PC-9 (cell line): ENCODE measurements at regions of chr6 and their contacts with region 1.

Region 1: GRCh38 chr6:119147101-119148053 is 68.9 kb upstream of the FAM184A start:
- DNase-seq: peak; percentile 78 to 99
- H3K4me3 ChIP-seq: no peak overlapping the region
- H3K27ac ChIP-seq: peak overlapping the region; percentile 75
- H3K4me1 ChIP-seq: peaks cover 43% of the 10 kb centered on the region
- H3K27me3 ChIP-seq: no peaks in the 10 kb centered on the region
- CTCF ChIP-seq: no peak

Region 2: GRCh38 chr6:118709859-118710350 is 437.5 kb before region 1 on chr6:
- CTCF ChIA-PET with region 1: no interaction called
- POLR2A ChIA-PET with region 1: no interaction called
- intact Hi-C with region 1: no loop called
- DNase-seq: peak in 1 of 2 experiments; percentile 82
- H3K4me3 ChIP-seq: peak overlapping the region; percentile 71
- H3K27ac ChIP-seq: peak overlapping the region; percentile 93
- H3K4me1 ChIP-seq: peaks cover 52% of the 10 kb centered on the region
- H3K27me3 ChIP-seq: no peaks in the 10 kb centered on the region
- CTCF ChIP-seq: no peak

Region 3: GRCh38 chr6:119129148-119129967 is 18.0 kb before region 1 on chr6:
- CTCF ChIA-PET with region 1: interaction called, 11 read pairs
- POLR2A ChIA-PET with region 1: no interaction called
- intact Hi-C with region 1: loop called (anchors 1 kb)
- DNase-seq: peak; percentile 20 to 68
- H3K4me3 ChIP-seq: 0 out of 2 replicates have a peak overlapping the region, but pooled peaks have one; percentile 2
- H3K27ac ChIP-seq: peak overlapping the region; percentile 55
- H3K4me1 ChIP-seq: peaks cover 35% of the 10 kb centered on the region
- H3K27me3 ChIP-seq: no peaks in the 10 kb centered on the region
- CTCF ChIP-seq: peak; percentile 96

Region 4: DNA sequence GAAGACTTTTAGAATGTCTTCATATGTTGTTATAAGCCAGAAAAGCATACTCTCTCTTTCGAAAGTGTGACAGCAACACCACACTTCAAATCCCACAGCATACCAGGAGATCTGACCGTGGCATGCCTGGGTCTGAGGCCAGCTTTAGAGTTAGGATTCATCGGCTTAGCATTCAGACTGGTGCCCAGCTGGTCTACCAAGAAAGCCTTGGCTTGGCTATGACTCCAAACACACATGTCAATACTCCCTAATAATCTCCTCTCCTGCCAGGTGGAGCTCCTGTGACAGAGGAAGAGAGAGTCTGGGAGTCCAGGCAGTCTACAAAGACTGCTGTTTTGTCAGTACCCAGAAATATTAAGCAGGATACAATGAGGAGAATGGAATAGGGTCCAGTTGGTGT is 279.2 kb after region 1 on chr6:
- CTCF ChIA-PET with region 1: no interaction called
- POLR2A ChIA-PET with region 1: no interaction called
- intact Hi-C with region 1: no loop called
- DNase-seq: no peak
- H3K4me3 ChIP-seq: no peak overlapping the region
- H3K27ac ChIP-seq: no peak overlapping the region
- H3K4me1 ChIP-seq: no peaks in the 10 kb centered on the region
- H3K27me3 ChIP-seq: no peaks in the 10 kb centered on the region
- CTCF ChIP-seq: no peak

Region 5: DNA sequence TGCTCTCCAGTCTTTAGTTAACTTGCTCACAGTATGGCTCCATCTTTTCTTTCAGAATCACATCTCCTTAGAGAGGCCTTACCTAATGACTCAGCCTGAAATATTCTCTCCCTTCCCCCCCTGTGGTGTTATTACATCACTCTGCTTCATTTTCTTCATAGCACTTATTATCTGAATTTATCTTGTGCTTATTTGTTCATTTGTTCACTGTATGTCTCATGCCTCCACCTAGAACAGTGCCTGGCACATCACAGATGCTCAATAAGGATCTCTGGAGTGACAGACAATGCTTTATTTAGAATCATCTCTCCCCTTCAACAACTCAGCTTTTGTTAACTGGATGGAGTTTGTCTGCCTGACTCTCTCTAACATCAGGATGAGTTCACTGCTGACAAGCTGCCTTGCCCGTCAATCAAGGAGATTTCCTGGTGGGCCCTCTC is 298.8 kb after region 1 on chr6:
- CTCF ChIA-PET with region 1: no interaction called
- POLR2A ChIA-PET with region 1: no interaction called
- intact Hi-C with region 1: loop called (anchors 1 kb)
- DNase-seq: peak; percentile 9 to 72
- H3K4me3 ChIP-seq: peak overlapping the region; percentile 30; the same call in 1 of the 2 replicates
- H3K27ac ChIP-seq: peak overlapping the region; percentile 96
- H3K4me1 ChIP-seq: peaks cover 46% of the 10 kb centered on the region
- H3K27me3 ChIP-seq: no peaks in the 10 kb centered on the region
- CTCF ChIP-seq: no peak

Region 6: DNA sequence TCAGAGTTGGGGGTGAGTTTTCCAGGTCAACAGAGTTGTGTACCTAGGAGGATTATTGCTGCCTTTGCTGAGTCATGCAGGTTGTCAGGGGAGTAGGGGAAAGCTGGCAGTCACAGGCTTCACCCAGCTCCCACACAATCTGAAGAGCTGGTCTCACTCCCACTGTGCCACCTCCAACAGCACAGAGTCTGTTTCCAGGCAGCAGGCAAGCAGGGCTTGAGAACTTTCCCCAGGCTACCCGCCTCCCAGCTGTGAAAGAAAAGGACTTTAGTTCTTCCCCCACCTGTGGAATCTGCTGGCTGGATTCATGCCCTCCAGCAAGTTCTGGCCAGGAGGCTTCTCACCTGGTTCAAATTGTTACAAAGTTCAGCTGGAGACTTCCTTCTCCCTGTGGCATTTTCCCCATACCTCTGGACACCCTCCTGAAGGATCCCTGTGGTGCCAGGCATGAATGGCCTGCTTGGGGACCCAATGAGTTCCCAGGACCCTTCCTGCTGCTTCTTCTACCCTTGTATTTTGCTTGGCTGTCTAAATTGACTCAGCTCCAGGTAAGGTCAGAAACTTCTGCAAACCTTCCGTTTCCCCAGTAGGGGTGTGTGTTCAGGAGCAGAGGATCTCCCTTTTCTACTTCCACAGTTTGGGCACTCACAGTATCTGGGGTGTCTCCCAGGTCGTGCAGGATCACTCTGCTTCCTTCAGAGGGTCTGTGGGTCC is 580.3 kb after region 1 on chr6:
- CTCF ChIA-PET with region 1: no interaction called
- POLR2A ChIA-PET with region 1: no interaction called
- intact Hi-C with region 1: loop called (anchors 1 kb)
- DNase-seq: peak; percentile 86 to 99
- H3K4me3 ChIP-seq: peak overlapping the region; percentile 56
- H3K27ac ChIP-seq: peak overlapping the region; percentile 98
- H3K4me1 ChIP-seq: peaks cover 41% of the 10 kb centered on the region
- H3K27me3 ChIP-seq: no peaks in the 10 kb centered on the region
- CTCF ChIP-seq: peak; percentile 73

Region 7: DNA sequence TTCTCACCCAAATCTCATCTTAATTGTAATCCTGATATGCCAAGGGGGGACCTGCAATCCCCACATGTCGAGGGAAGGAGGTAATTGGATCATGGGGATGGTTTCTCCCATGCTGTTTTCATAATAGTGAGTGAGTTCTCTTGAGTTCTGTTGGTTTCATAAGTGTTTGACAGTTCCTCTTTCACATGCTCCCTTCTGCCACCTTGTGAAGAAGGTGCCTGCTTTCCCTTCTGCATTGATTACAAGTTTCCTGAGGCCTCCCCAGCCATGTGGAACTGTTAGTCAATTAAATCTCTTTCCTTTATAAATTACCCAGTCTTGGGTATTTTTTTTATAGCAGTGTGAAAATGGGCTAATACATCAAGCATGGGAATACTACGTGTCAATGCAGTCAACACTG is 1127.2 kb after region 1 on chr6:
- CTCF ChIA-PET with region 1: no interaction called
- POLR2A ChIA-PET with region 1: interaction called, 25 read pairs
- intact Hi-C with region 1: no loop called
- DNase-seq: no peak
- H3K4me3 ChIP-seq: no peak overlapping the region
- H3K27ac ChIP-seq: no peak overlapping the region
- H3K4me1 ChIP-seq: no peaks in the 10 kb centered on the region
- H3K27me3 ChIP-seq: no peaks in the 10 kb centered on the region
- CTCF ChIP-seq: no peak

Region 8: DNA sequence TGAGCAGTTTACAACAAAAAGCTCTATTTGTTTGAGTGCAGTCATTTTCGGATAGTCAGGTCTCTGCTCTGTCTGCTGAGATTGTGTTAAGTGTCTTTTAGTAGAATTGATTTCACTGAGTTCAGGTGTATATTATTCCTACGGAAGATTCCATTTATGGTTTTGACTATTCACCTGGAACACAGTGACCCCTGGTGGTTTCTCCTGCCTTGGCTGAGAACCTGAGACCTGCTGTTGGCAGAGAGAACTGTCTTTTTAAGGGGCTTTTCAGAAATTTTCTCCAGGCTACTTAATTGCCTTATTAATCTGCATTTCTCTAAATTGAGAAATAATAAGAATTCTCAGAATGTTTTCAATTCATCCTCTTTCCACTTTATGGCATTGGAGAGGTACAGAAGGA is 1678.9 kb after region 1 on chr6:
- CTCF ChIA-PET with region 1: no interaction called
- POLR2A ChIA-PET with region 1: no interaction called
- intact Hi-C with region 1: loop called (anchors 5 kb)
- DNase-seq: peak; percentile 37 to 42
- H3K4me3 ChIP-seq: no peak overlapping the region
- H3K27ac ChIP-seq: no peak overlapping the region
- H3K4me1 ChIP-seq: no peaks in the 10 kb centered on the region
- H3K27me3 ChIP-seq: no peaks in the 10 kb centered on the region
- CTCF ChIP-seq: peak; percentile 93